Activated CD8-positive, alpha-beta T cell treated with anti-CD3 and anti-CD28 coated beads for 36 hours (primary cell): ENCODE measurements at regions of chr9 and their contacts with region 1.

Region 1: GRCh38 chr9:107443786-107444185 is 45.8 kb downstream of the KLF4 start:
- DNase-seq: no peak
- ATAC-seq: no peak
- H3K4me3 Mint-ChIP-seq: no peak overlapping the region
- H3K27ac Mint-ChIP-seq: no peak overlapping the region
- H3K4me1 Mint-ChIP-seq: no peaks in the 10 kb centered on the region
- H3K27me3 Mint-ChIP-seq: no peaks in the 10 kb centered on the region
- CTCF ChIP-seq: no peak

Region 2: DNA sequence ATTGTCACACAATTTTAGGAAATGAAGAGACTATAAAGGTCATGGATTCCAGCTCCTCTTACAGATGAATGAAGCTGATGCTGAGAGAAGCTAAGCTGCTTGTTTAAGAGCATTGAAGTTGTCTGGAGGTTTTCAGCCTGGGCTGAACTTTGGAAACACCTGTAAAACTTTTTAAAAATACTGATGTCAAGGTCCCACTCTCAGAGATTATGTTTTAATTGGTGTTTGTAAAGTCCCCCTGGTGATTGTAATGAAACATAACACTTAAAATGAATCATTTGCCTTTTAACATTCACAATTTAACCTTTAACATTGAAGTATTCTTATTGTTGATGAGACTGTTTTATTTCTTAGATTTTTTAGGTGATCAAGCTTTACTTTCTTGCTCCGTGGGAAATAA is 144.3 kb before region 1 on chr9:
- CTCF ChIA-PET with region 1: no interaction called
- POLR2A ChIA-PET with region 1: no interaction called
- intact Hi-C with region 1: no loop called
- DNase-seq: no peak
- ATAC-seq: peak; percentile 71
- H3K4me3 Mint-ChIP-seq: no peak overlapping the region
- H3K27ac Mint-ChIP-seq: peak overlapping the region; percentile 67
- H3K4me1 Mint-ChIP-seq: peaks cover 41% of the 10 kb centered on the region
- H3K27me3 Mint-ChIP-seq: no peaks in the 10 kb centered on the region
- CTCF ChIP-seq: peak; percentile 41

Region 3: GRCh38 chr9:107425101-107426045 is 18.4 kb before region 1 on chr9:
- CTCF ChIA-PET with region 1: interaction called, 10 read pairs
- POLR2A ChIA-PET with region 1: no interaction called
- intact Hi-C with region 1: no loop called
- DNase-seq: peak; percentile 75
- ATAC-seq: peak; percentile 89
- H3K4me3 Mint-ChIP-seq: peak overlapping the region; percentile 38
- H3K27ac Mint-ChIP-seq: no peak overlapping the region
- H3K4me1 Mint-ChIP-seq: no peaks in the 10 kb centered on the region
- H3K27me3 Mint-ChIP-seq: peaks cover 17% of the 10 kb centered on the region
- CTCF ChIP-seq: peak; percentile 95